SK-N-SH (cell line): ENCODE measurements at regions of chr10 and their contacts with region 1.

Region 1: GRCh38 chr10:114550756-114551635 is 107.1 kb downstream of the ABLIM1 start:
- DNase-seq: no peak
- H3K4me3 ChIP-seq: no peak overlapping the region; a peak in 1 of 4 replicates
- H3K27ac ChIP-seq: peak overlapping the region; percentile 11 to 29; a peak in 1 of 4 replicates
- H3K4me1 ChIP-seq: peaks cover 6 to 11% of the 10 kb centered on the region in 2 experiments; a peak in 2 of 4 replicates
- H3K27me3 ChIP-seq: no peaks in the 10 kb centered on the region
- CTCF ChIP-seq: peak; percentile 68
- EP300 ChIP-seq: no peak
- RAD21 ChIP-seq: peak; percentile 63

Region 2: GRCh38 chr10:114397651-114398145 is 153.3 kb before region 1 on chr10:
- CTCF ChIA-PET with region 1: no interaction called
- POLR2A ChIA-PET with region 1: no interaction called
- DNase-seq: no peak
- H3K4me3 ChIP-seq: no peak overlapping the region
- H3K27ac ChIP-seq: no peak overlapping the region
- H3K4me1 ChIP-seq: no peaks in the 10 kb centered on the region; a peak in 1 of 4 replicates
- H3K27me3 ChIP-seq: peaks cover 32% of the 10 kb centered on the region; the same call in 1 of the 2 replicates
- CTCF ChIP-seq: no peak
- EP300 ChIP-seq: no peak
- RAD21 ChIP-seq: no peak

Region 3: GRCh38 chr10:114526504-114527238 is 24.3 kb before region 1 on chr10:
- CTCF ChIA-PET with region 1: interaction called, 16 read pairs
- POLR2A ChIA-PET with region 1: no interaction called
- DNase-seq: peak; percentile 85
- H3K4me3 ChIP-seq: peak overlapping the region; percentile 42 to 53
- H3K27ac ChIP-seq: peak overlapping the region; percentile 7 to 93; a peak in 3 of 4 replicates
- H3K4me1 ChIP-seq: peaks cover 0 to 22% of the 10 kb centered on the region in 2 experiments; a peak in 2 of 4 replicates
- H3K27me3 ChIP-seq: no peaks in the 10 kb centered on the region
- CTCF ChIP-seq: no peak
- EP300 ChIP-seq: no peak
- RAD21 ChIP-seq: 0 out of 2 replicates have a peak, but pooled peaks have one; percentile 14

Region 4: DNA sequence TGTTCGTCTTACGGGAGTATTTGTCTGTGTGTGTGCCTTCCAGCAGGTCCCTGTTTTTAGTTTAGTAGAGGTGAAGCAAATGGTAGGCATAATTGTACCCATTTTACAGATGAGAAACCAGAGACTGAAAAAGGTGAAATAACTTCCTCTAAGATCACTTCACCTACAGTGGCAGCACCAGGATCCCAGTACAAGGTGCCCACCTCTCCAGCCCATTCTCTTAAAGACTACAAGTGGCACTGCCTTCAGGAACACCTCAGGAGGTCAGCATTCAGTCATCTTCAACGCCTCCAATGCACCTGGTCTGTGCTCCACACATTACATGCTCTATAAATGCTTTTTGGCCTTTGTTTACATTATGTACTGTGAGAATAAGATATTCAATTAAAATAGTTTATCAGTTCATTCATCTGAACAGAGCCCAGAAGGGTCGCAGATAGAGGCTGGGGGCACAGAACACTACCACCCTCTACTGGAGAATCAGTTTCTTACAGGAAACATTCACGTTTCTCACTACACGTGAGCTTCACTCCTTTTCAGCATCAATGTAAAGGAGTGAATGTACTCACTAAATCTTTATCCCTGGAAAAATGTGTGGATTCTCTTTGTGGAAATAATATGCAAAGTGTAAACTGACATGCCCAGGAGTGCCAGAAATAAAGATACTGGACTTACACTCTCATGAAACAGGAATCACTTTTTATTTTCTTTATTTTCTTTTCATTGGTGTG is 152.5 kb after region 1 on chr10:
- CTCF ChIA-PET with region 1: interaction called, 63 read pairs
- POLR2A ChIA-PET with region 1: no interaction called
- DNase-seq: peak; percentile 64
- H3K4me3 ChIP-seq: no peak overlapping the region
- H3K27ac ChIP-seq: no peak overlapping the region
- H3K4me1 ChIP-seq: peaks cover 0 to 4% of the 10 kb centered on the region in 2 experiments; a peak in 2 of 4 replicates
- H3K27me3 ChIP-seq: no peaks in the 10 kb centered on the region
- CTCF ChIP-seq: peak; percentile 81
- EP300 ChIP-seq: no peak
- RAD21 ChIP-seq: peak; percentile 91

Region 5: DNA sequence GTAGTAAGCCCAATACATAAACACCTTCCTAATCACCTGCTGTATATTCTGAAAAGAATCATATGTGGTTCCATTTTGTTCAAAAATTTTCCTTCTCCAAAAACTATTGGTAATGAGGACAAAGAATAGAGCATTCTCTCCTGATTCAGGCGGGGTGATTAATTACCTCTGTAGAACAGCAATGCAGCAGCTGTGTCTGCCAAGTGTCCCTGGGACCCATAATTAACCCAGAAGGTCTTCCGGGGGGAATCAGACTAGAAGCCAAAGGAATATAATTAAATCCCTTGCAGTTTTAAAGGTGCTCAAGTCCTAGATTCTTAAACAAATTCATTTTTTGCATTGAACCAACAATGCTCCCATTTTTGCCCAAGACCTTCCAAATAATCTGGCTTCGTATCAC is 167.4 kb after region 1 on chr10:
- CTCF ChIA-PET with region 1: no interaction called
- POLR2A ChIA-PET with region 1: no interaction called
- DNase-seq: no peak
- H3K4me3 ChIP-seq: no peak overlapping the region
- H3K27ac ChIP-seq: no peak overlapping the region
- H3K4me1 ChIP-seq: peaks cover 15 to 18% of the 10 kb centered on the region in 2 experiments
- H3K27me3 ChIP-seq: no peaks in the 10 kb centered on the region
- CTCF ChIP-seq: no peak
- EP300 ChIP-seq: no peak
- RAD21 ChIP-seq: no peak

Region 6: DNA sequence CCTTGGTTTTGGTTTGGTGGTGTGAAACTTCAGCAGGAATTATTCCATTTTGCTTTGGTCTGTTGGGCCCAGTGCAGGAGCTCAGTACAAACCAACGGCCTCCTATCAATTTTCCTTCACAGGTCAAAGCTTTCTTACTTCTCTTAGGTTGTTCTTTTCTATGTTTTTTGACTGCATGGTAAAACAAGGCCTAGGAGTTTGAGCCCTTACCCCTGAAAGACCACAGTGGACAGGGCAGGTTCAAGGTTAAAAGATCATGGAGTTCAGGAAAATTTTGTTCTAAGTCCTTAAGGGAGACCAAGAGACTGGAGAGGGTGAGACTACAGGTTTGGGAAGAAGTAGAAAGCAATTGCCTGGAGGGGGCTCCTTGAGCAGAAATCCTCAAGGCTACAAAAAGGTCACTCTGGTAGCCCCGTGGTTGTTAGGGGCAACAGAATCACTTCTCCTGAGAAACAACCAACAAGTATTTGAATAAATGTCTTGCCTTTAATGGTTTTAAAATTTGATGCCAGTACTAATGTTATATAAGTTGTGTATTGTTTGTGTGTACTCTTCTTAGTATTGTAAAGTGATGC is 229.7 kb after region 1 on chr10:
- CTCF ChIA-PET with region 1: interaction called, 132 read pairs
- POLR2A ChIA-PET with region 1: no interaction called
- DNase-seq: no peak
- H3K4me3 ChIP-seq: no peak overlapping the region
- H3K27ac ChIP-seq: peak overlapping the region; percentile 58 to 94; a peak in 3 of 4 replicates
- H3K4me1 ChIP-seq: peaks cover 3 to 15% of the 10 kb centered on the region in 2 experiments; a peak in 3 of 4 replicates
- H3K27me3 ChIP-seq: no peaks in the 10 kb centered on the region
- CTCF ChIP-seq: peak; percentile 15; the same call in 1 of the 2 replicates
- EP300 ChIP-seq: no peak
- RAD21 ChIP-seq: no peak